ENCODE measurements at regions of chr5 and their contacts with region 1.

Region 1: GRCh38 chr5:79020861-79021561 is 35.9 kb upstream of the ARSB start:
- DNase-seq: peak; percentile 65
- ATAC-seq: peak; percentile 68
- H3K4me3 Mint-ChIP-seq: no peak overlapping the region
- H3K27ac Mint-ChIP-seq: peak overlapping the region; percentile 29
- H3K4me1 Mint-ChIP-seq: peaks cover 11% of the 10 kb centered on the region
- H3K27me3 Mint-ChIP-seq: peaks cover 88% of the 10 kb centered on the region

Region 2: GRCh38 chr5:78912085-78912771 is 108.8 kb before region 1 on chr5:
- CTCF ChIA-PET with region 1: no interaction called
- DNase-seq: no peak
- ATAC-seq: no peak
- H3K4me3 Mint-ChIP-seq: no peak overlapping the region
- H3K27ac Mint-ChIP-seq: no peak overlapping the region
- H3K4me1 Mint-ChIP-seq: no peaks in the 10 kb centered on the region
- H3K27me3 Mint-ChIP-seq: no peaks in the 10 kb centered on the region

Region 3: DNA sequence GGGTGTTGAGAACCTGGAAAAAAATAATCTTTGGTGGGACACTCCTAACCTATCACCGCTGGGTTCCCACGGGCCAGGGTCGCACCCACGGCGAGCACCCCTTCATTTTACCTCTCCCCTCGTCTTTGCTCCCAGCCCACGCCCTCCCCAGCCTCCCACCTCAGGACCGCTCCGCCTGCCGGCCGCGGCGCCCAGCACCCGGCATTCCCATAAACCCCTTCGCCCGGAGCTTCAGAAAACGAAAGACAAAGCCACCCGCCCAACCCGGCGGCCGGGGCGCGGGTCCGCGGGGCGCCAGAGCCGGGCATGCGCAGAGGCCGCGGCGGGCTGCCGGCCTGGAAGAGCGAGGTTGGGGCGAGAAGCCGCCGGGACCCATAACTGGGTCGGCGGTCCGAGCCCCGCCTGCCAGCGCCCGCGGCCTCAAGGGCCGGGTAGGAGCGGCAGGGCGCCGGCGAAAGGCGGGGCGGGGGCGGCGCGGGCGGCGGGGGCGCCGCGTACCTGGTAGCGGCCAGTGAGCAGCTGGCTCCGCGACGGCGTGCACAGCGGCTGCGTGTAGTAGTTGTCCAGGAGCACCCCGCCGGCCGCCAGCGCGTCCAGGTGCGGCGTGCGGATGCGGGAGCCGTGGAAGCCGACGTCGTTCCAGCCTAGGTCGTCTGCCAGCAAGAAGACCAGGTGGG is 36.4 kb before region 1 on chr5:
- CTCF ChIA-PET with region 1: interaction called, 49 read pairs
- DNase-seq: peak; percentile 82
- ATAC-seq: peak; percentile 72
- H3K4me3 Mint-ChIP-seq: peak overlapping the region; percentile 89
- H3K27ac Mint-ChIP-seq: peak overlapping the region; percentile 91
- H3K4me1 Mint-ChIP-seq: peaks cover 45% of the 10 kb centered on the region
- H3K27me3 Mint-ChIP-seq: peaks cover 3% of the 10 kb centered on the region

Region 4: GRCh38 chr5:79042188-79042587 is 21.2 kb after region 1 on chr5:
- CTCF ChIA-PET with region 1: interaction called, 13 read pairs
- DNase-seq: no peak
- ATAC-seq: no peak
- H3K4me3 Mint-ChIP-seq: no peak overlapping the region
- H3K27ac Mint-ChIP-seq: no peak overlapping the region
- H3K4me1 Mint-ChIP-seq: no peaks in the 10 kb centered on the region
- H3K27me3 Mint-ChIP-seq: peaks cover 23% of the 10 kb centered on the region

Region 5: GRCh38 chr5:79074641-79075040 is 53.6 kb after region 1 on chr5:
- CTCF ChIA-PET with region 1: interaction called, 12 read pairs
- DNase-seq: no peak
- ATAC-seq: peak; percentile 39
- H3K4me3 Mint-ChIP-seq: no peak overlapping the region
- H3K27ac Mint-ChIP-seq: peak overlapping the region; percentile 32
- H3K4me1 Mint-ChIP-seq: peaks cover 17% of the 10 kb centered on the region
- H3K27me3 Mint-ChIP-seq: peaks cover 35% of the 10 kb centered on the region

Region 6: GRCh38 chr5:79464695-79465332 is 443.8 kb after region 1 on chr5:
- CTCF ChIA-PET with region 1: interaction called, 67 read pairs
- DNase-seq: no peak
- ATAC-seq: no peak
- H3K4me3 Mint-ChIP-seq: no peak overlapping the region
- H3K27ac Mint-ChIP-seq: no peak overlapping the region
- H3K4me1 Mint-ChIP-seq: no peaks in the 10 kb centered on the region
- H3K27me3 Mint-ChIP-seq: peaks cover 4% of the 10 kb centered on the region